ENCODE measurements at regions of chr22 and their contacts with region 1.

Region 1: GRCh38 chr22:35582861-35583670 is 34.1 kb downstream of the MB start:
- DNase-seq: peak; percentile 73
- H3K4me3 ChIP-seq: no peak overlapping the region
- H3K27ac ChIP-seq: no peak overlapping the region
- H3K4me1 ChIP-seq: peaks cover 5% of the 10 kb centered on the region
- H3K27me3 ChIP-seq: no peaks in the 10 kb centered on the region
- CTCF ChIP-seq: peak; percentile 68 to 91 (median 82)
- POLR2A ChIP-seq: no peak

Region 2: GRCh38 chr22:35350539-35351503 is 232.2 kb before region 1 on chr22:
- intact Hi-C with region 1: loop called (anchors 10 kb)
- DNase-seq: peak; percentile 92
- H3K4me3 ChIP-seq: peak overlapping the region; percentile 46 to 62
- H3K27ac ChIP-seq: peak overlapping the region; percentile 79 to 80
- H3K4me1 ChIP-seq: peaks cover 6% of the 10 kb centered on the region
- H3K27me3 ChIP-seq: no peaks in the 10 kb centered on the region
- CTCF ChIP-seq: peak; percentile 91 to 94 (median 93)
- POLR2A ChIP-seq: no peak

Region 3: GRCh38 chr22:35430897-35431322 is 152.2 kb before region 1 on chr22:
- intact Hi-C with region 1: loop called (anchors 10 kb)
- DNase-seq: peak; percentile 90
- H3K4me3 ChIP-seq: no peak overlapping the region
- H3K27ac ChIP-seq: no peak overlapping the region
- H3K4me1 ChIP-seq: peaks cover 5% of the 10 kb centered on the region
- H3K27me3 ChIP-seq: no peaks in the 10 kb centered on the region
- CTCF ChIP-seq: peak; percentile 95 to 97 (median 96)
- POLR2A ChIP-seq: no peak